Activated CD4-positive, alpha-beta memory T cell treated with anti-CD3 and anti-CD28 coated beads, Interleukin-2, amount 10 ng/mL, durations not matched to agents 7 days and 5 days (primary cell): ENCODE measurements at regions of chr2 and their contacts with region 1.

Region 1: GRCh38 chr2:102366406-102367112 is 11.0 kb downstream of the IL18R1 start:
- DNase-seq: no peak
- H3K4me3 Mint-ChIP-seq: peak overlapping the region; percentile 53
- H3K27ac Mint-ChIP-seq: peak overlapping the region; percentile 92
- H3K4me1 Mint-ChIP-seq: peaks cover 51% of the 10 kb centered on the region
- H3K27me3 Mint-ChIP-seq: no peaks in the 10 kb centered on the region

Region 2: GRCh38 chr2:102418421-102418961 is 51.9 kb after region 1 on chr2:
- CTCF ChIA-PET with region 1: no interaction called
- POLR2A ChIA-PET with region 1: interaction called, 14 read pairs
- DNase-seq: no peak
- H3K4me3 Mint-ChIP-seq: peak overlapping the region; percentile 75
- H3K27ac Mint-ChIP-seq: peak overlapping the region; percentile 95
- H3K4me1 Mint-ChIP-seq: peaks cover 63% of the 10 kb centered on the region
- H3K27me3 Mint-ChIP-seq: peaks cover 14% of the 10 kb centered on the region